ENCODE measurements at regions of chr11 and their contacts with region 1.

Region 1: DNA sequence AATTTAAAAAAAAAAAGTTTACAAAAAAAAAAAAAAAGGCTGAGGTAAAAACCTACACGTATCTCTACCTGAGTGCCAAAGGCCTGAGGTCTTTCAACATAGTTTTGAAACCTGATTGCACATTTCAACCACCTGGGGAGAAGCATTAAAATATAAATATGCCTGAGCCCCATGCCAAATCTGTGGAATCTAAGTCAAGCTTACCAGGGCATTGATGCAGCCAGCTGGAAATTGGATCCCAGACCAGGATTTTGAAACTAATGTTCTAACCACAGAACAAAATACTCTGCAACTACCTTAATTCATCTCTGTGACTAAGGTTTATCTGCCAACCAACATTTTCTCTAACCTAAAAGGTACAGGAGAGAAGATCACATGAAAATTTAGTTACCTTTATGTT is 38.8 kb upstream of the CHRNA10 start:
- DNase-seq: no peak
- H3K4me3 Mint-ChIP-seq: no peak overlapping the region
- H3K27ac Mint-ChIP-seq: no peak overlapping the region
- H3K4me1 Mint-ChIP-seq: peaks cover 3% of the 10 kb centered on the region
- H3K27me3 Mint-ChIP-seq: no peaks in the 10 kb centered on the region

Region 2: DNA sequence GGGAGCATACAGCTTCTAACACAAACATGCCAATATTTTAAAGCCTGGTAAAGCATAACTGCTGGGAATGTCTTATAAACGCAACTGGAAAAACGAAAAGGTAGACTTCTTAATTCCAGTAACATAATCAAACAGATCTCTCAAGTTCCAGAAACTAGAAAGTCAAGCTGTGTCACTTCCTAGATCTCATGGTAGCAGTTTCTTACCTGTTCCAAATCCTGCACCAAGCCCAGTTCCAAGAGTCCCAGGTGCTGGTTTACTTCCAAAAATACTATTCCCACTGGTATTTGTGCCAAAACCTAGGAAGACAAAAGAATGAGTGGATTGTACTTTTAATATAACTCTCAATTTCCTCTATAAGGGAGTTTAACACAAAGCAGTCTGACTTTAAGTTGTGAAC is 43.1 kb after region 1 on chr11:
- CTCF ChIA-PET with region 1: no interaction called
- intact Hi-C with region 1: loop called (anchors 10 kb)
- DNase-seq: no peak
- H3K4me3 Mint-ChIP-seq: no peak overlapping the region
- H3K27ac Mint-ChIP-seq: peak overlapping the region; percentile 30
- H3K4me1 Mint-ChIP-seq: peaks cover under 1% of the 10 kb centered on the region
- H3K27me3 Mint-ChIP-seq: no peaks in the 10 kb centered on the region

Region 3: GRCh38 chr11:3767536-3767935 is 57.6 kb after region 1 on chr11:
- CTCF ChIA-PET with region 1: no interaction called
- intact Hi-C with region 1: no loop called
- DNase-seq: no peak
- H3K4me3 Mint-ChIP-seq: no peak overlapping the region
- H3K27ac Mint-ChIP-seq: no peak overlapping the region
- H3K4me1 Mint-ChIP-seq: no peaks in the 10 kb centered on the region
- H3K27me3 Mint-ChIP-seq: no peaks in the 10 kb centered on the region

Region 4: GRCh38 chr11:5317292-5317691 is 1607.3 kb after region 1 on chr11:
- CTCF ChIA-PET with region 1: no interaction called
- intact Hi-C with region 1: no loop called
- DNase-seq: no peak
- H3K4me3 Mint-ChIP-seq: no peak overlapping the region
- H3K27ac Mint-ChIP-seq: no peak overlapping the region
- H3K4me1 Mint-ChIP-seq: no peaks in the 10 kb centered on the region
- H3K27me3 Mint-ChIP-seq: peaks cover 2% of the 10 kb centered on the region